Dendritic cell treated with granulocyte-macrophage colony-stimulating factor and Interleukin-4, amounts not matched to agents 40 ng/mL and 50 ng/mL, for 4 days (primary cell): ENCODE measurements at regions of chr1 and their contacts with region 1.

Region 1: GRCh38 chr1:7770997-7771822 is at the start of gene VAMP3:
- H3K4me3 Mint-ChIP-seq: peak within 1 kb of the TSS; percentile 94
- H3K27ac Mint-ChIP-seq: peak within 1 kb of the TSS; percentile 99
- H3K4me1 Mint-ChIP-seq: peaks cover 52% of the 10 kb centered on the region
- H3K27me3 Mint-ChIP-seq: no peaks in the 10 kb centered on the region

Region 2: GRCh38 chr1:7704214-7705047 is 66.8 kb before region 1 on chr1:
- intact Hi-C with region 1: loop called (anchors 2 kb)
- H3K4me3 Mint-ChIP-seq: peak overlapping the region; percentile 76
- H3K27ac Mint-ChIP-seq: peak overlapping the region; percentile 78
- H3K4me1 Mint-ChIP-seq: peaks cover 7% of the 10 kb centered on the region
- H3K27me3 Mint-ChIP-seq: peaks cover 74% of the 10 kb centered on the region